Activated B cell treated with CpG ODN at 0.5 μM for 24 hours (primary cell): ENCODE measurements at regions of chr11 and their contacts with region 1.

Region 1: GRCh38 chr11:65418711-65419459 is 3.7 kb upstream of the NEAT1 start:
- DNase-seq: peak; percentile 87
- ATAC-seq: peak; percentile 50
- H3K4me3 Mint-ChIP-seq: peak overlapping the region; percentile 87
- H3K27ac Mint-ChIP-seq: peak overlapping the region; percentile 100
- H3K4me1 Mint-ChIP-seq: peaks cover 71% of the 10 kb centered on the region
- H3K27me3 Mint-ChIP-seq: no peaks in the 10 kb centered on the region
- CTCF ChIP-seq: no peak

Region 2: DNA sequence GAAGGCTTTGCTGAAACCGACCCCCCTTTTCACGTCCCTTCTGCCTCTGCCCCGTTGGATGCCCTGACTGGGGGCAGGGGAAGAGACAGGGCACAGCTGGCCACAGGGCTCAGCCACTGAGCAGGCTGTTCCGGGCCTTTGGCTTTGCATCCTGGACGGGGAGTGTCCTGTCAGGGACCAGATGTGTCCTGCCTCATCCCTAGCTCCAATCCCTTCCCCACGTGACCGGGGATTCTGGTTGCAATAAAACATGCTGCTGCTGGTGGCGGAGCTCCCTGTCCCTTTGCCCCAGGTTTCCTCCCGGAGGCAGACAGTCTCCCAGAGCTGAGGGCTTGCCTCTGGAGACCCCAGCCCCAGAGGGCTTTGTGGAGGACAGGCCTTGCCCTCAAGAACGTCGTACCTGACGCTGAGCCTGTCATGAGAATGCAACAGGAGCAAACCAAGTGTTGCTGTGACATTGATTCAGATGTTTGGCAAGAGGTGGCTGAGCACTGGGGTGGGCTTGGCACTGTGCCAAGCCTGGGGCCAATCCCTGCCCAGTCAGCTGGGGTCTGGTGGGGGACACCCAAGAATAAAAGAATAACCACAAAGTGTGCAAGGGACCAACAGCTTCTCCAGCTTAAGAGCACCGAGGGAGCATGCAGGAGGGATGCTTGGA is 96.9 kb before region 1 on chr11:
- CTCF ChIA-PET with region 1: no interaction called
- POLR2A ChIA-PET with region 1: no interaction called
- intact Hi-C with region 1: no loop called
- DNase-seq: no peak
- ATAC-seq: no peak
- H3K4me3 Mint-ChIP-seq: no peak overlapping the region
- H3K27ac Mint-ChIP-seq: no peak overlapping the region
- H3K4me1 Mint-ChIP-seq: no peaks in the 10 kb centered on the region
- H3K27me3 Mint-ChIP-seq: no peaks in the 10 kb centered on the region
- CTCF ChIP-seq: no peak

Region 3: DNA sequence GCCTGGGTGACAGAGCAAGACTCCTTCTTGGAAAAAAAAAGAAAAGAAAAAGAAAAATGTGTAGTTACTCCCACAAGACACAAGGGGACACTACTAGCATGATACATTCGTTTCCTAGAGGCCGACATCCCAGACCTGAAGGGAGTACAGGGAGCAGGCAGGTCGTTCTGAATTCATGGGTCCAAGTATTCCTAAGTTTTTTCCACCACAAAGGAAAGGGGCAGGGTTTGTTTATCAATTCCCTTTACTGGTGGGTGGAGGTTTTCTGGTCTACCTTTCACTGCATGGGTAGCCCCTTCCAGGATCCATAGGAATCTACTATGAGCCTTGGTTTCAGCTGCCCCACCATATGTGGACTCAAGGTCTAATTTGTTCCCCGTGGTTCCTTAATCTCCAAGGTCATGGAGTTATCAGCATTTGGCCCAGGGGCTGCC is 52.5 kb before region 1 on chr11:
- CTCF ChIA-PET with region 1: interaction called, 3 read pairs
- POLR2A ChIA-PET with region 1: interaction called, 5 read pairs
- intact Hi-C with region 1: loop called (anchors 1 kb)
- DNase-seq: no peak
- ATAC-seq: peak; percentile 72
- H3K4me3 Mint-ChIP-seq: no peak overlapping the region
- H3K27ac Mint-ChIP-seq: no peak overlapping the region
- H3K4me1 Mint-ChIP-seq: peaks cover 25% of the 10 kb centered on the region
- H3K27me3 Mint-ChIP-seq: no peaks in the 10 kb centered on the region
- CTCF ChIP-seq: peak; percentile 60

Region 4: DNA sequence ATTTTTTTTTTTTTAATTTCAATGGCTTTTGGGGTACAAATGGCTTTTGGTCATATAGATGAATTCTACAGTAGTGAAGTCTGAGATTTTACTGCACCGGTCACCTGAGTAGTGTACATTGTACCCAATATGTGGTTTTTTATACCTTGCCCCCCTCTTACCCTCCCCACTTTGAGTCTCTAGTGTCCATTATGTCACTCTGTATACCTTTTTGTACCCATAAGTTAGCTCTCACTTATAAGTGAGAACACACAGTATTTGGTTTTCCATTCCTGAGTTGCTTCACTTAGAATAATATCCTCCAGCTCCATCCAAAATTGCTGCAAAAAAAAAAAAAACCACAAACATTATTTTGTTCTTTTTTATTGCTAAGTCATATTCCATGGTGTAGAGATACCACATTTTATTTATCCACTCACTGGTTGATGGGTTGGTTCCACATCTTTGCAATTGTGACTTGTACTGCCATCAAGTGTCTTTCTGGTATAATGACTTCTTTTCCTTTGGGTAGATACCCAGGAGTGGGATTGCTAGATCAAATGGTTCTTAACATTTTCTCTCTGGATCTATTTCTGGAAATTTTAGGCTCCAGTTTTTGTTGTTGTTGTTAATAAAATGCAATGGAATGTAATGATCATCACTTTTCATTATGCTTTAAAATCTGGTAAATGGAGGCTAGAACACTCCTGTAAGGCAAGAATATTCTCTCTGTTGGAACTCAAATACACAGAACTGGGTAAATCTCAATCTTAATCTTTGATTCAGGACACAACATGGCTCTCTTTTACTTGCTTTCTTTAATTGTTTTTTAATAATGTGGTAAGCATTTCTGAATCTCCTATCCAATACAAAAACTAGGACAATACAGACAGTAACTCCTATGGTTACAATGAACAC is 14.0 kb after region 1 on chr11:
- CTCF ChIA-PET with region 1: interaction called, 15 read pairs
- POLR2A ChIA-PET with region 1: interaction called, 210 read pairs
- intact Hi-C with region 1: loop called (anchors 1 kb)
- DNase-seq: no peak
- ATAC-seq: peak; percentile 30
- H3K4me3 Mint-ChIP-seq: no peak overlapping the region
- H3K27ac Mint-ChIP-seq: peak overlapping the region; percentile 73
- H3K4me1 Mint-ChIP-seq: peaks cover 64% of the 10 kb centered on the region
- H3K27me3 Mint-ChIP-seq: no peaks in the 10 kb centered on the region
- CTCF ChIP-seq: no peak

Region 5: GRCh38 chr11:65454696-65455456 is 36.0 kb after region 1 on chr11:
- CTCF ChIA-PET with region 1: interaction called, 3 read pairs
- POLR2A ChIA-PET with region 1: interaction called, 332 read pairs
- intact Hi-C with region 1: loop called (anchors 1 kb)
- DNase-seq: peak; percentile 83
- ATAC-seq: peak; percentile 98
- H3K4me3 Mint-ChIP-seq: peak overlapping the region; percentile 95
- H3K27ac Mint-ChIP-seq: peak overlapping the region; percentile 90
- H3K4me1 Mint-ChIP-seq: peaks cover 32% of the 10 kb centered on the region
- H3K27me3 Mint-ChIP-seq: no peaks in the 10 kb centered on the region
- CTCF ChIP-seq: no peak

Region 6: DNA sequence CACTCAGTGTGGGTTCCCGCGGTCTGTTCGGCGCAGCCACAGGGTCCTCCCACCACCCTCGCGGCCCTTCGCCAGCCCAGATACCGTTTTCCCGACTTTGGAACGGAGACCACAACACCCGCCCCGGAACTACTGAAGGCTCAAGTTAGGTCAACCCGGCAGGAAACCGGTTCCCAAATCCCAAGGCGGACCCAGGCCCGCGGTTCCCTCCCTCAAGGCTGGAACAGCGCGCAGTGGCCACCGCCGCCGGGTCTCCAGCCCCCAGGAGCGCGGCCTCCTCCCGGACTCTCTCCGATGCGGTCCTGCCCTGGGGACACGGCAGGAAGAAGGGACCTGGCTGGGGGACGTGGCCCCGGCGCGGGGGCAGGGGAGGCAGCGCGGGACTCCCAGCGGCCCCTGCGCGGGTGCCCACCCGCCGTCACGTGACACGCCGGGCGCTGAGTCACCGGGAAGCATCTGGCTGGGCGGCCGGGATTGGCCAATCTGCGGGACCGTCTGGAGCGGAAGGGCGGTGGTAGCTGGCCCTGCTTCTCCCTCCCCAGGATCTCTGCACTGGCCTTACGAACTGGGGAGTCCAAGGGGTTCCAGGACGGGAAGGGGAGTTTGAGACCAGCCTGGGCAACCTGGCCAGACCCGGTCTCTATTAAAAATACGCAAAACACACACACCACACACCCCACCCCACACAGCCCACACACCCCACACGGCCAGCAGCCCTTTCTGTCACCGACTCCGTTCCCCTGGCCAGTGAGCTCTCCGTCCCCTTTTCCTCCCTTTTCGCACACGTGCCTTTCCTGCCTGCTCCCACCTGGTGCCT is 58.5 kb after region 1 on chr11:
- CTCF ChIA-PET with region 1: interaction called, 7 read pairs
- POLR2A ChIA-PET with region 1: interaction called, 313 read pairs
- intact Hi-C with region 1: loop called (anchors 2 kb)
- DNase-seq: peak; percentile 92
- ATAC-seq: peak; percentile 86
- H3K4me3 Mint-ChIP-seq: peak overlapping the region; percentile 96
- H3K27ac Mint-ChIP-seq: peak overlapping the region; percentile 99
- H3K4me1 Mint-ChIP-seq: peaks cover 24% of the 10 kb centered on the region
- H3K27me3 Mint-ChIP-seq: no peaks in the 10 kb centered on the region
- CTCF ChIP-seq: no peak

Region 7: DNA sequence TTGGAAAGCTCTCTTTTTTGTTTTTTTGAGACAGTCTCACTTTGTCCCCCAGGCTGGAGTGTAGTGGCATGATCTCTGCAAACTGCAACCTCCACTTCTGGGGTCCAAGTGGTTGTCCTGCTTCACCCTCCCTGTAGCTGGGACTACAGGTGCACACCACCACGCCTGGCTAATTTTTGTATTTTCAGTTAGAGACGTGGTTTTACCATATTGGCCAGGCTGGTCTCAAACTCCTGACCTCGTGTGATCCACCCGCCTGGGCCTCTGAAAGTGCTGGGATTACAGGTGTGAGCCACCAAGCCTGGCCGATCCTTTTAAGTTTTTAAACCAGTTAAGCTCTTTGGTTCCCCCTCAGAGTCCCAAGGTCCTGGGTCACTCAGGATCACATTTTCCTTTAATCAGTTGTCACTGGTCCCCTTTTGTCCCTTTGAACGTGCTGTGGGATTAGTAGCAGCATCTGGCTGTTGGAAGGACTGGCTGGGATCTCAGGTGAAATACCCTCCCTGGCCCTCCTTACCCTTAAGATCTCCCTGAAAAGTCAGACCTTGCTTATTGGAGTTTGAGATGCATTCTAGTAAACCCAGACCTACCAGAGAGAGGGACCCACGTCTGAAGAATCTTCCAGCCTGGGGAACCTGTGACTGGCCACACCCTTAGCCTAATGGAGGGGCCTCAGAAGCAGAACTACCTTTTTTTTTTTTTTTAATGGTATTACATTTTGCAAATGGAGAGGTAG is 88.1 kb after region 1 on chr11:
- CTCF ChIA-PET with region 1: interaction called, 289 read pairs
- POLR2A ChIA-PET with region 1: interaction called, 3,752 read pairs
- intact Hi-C with region 1: loop called (anchors 1 kb)
- DNase-seq: no peak
- ATAC-seq: peak; percentile 49
- H3K4me3 Mint-ChIP-seq: no peak overlapping the region
- H3K27ac Mint-ChIP-seq: peak overlapping the region; percentile 84
- H3K4me1 Mint-ChIP-seq: peaks cover 62% of the 10 kb centered on the region
- H3K27me3 Mint-ChIP-seq: no peaks in the 10 kb centered on the region
- CTCF ChIP-seq: no peak